Ovary (tissue), 10 donors: ENCODE measurements at regions of chr12 and their contacts with region 1.

Region 1: GRCh38 chr12:6778574-6779550 is 6.5 kb downstream of the LAG3 start:
- DNase-seq: peak; percentile 96 to 97 (median 97)
- H3K4me3 ChIP-seq: peak overlapping the region; percentile 37
- H3K27ac ChIP-seq: peak overlapping the region; percentile 61 to 87
- H3K4me1 ChIP-seq: peaks cover 2% of the 10 kb centered on the region
- H3K27me3 ChIP-seq: no peaks in the 10 kb centered on the region
- CTCF ChIP-seq: peak; percentile 98
- EP300 ChIP-seq: no peak
- POLR2A ChIP-seq: peak; percentile 43

Region 2: GRCh38 chr12:6554168-6555017 is 224.5 kb before region 1 on chr12:
- intact Hi-C with region 1: loop called in 1 of 4 experiments (anchors 10 kb)
- DNase-seq: peak; percentile 61 to 76 (median 74)
- H3K4me3 ChIP-seq: peak overlapping the region; percentile 79
- H3K27ac ChIP-seq: peak overlapping the region in 1 of 2 donors; percentile 26
- H3K4me1 ChIP-seq: peaks cover 25% of the 10 kb centered on the region
- H3K27me3 ChIP-seq: no peaks in the 10 kb centered on the region
- CTCF ChIP-seq: peak in 1 of 3 donors; percentile 43
- EP300 ChIP-seq: no peak
- POLR2A ChIP-seq: no peak

Region 3: DNA sequence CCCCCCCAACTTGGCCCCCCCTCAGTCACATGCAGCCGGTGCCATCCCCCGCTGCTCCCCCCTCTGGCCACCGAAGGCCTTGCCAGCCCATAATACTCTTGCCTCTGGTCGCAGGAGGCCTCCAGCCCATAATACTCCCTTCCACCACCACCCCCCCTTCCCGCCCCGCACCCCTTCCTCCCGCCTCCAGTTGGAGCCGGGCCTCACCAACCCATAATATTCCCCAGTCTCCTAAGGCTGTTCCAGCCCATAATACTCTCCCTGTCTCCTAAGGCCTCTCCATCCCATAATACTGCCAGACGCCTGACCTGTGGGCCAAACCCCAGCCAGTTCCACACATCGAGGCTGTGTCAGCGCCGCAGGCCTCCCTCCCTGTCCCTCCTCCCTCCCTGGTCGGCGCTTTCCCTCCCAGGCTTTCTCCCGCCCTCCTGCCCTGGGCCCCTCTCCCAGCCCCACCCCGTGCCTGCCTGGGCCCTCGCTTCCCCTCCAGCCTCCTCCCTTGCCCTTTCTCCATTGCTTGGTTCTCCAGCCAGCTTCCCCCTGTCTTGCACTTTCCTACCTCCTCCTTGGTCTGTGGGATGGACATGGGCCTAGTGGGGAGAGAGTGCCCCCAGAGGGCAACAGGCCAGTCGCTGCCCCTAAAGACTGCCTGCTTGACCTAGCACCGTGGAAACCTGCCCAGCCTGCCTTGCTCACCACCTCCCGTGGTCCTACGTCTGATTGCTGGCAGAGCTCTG is 164.9 kb before region 1 on chr12:
- intact Hi-C with region 1: loop called in 1 of 4 experiments (anchors 5 kb)
- DNase-seq: peak; percentile 94 to 97 (median 97)
- H3K4me3 ChIP-seq: no peak overlapping the region
- H3K27ac ChIP-seq: peak overlapping the region; percentile 87 to 93
- H3K4me1 ChIP-seq: peaks cover 4% of the 10 kb centered on the region
- H3K27me3 ChIP-seq: no peaks in the 10 kb centered on the region
- CTCF ChIP-seq: no peak
- EP300 ChIP-seq: no peak
- POLR2A ChIP-seq: no peak

Region 4: GRCh38 chr12:6700646-6701051 is 78.2 kb before region 1 on chr12 and contains the start of gene PIANP:
- intact Hi-C with region 1: no loop called
- DNase-seq: peak in 4 of 5 donors; percentile 25 to 75 (median 61)
- H3K4me3 ChIP-seq: peak within 1 kb of the TSS; percentile 62
- H3K27ac ChIP-seq: no peak within 1 kb of the TSS
- H3K4me1 ChIP-seq: peaks cover 2% of the 10 kb centered on the region
- H3K27me3 ChIP-seq: no peaks in the 10 kb centered on the region
- CTCF ChIP-seq: no peak
- EP300 ChIP-seq: no peak
- POLR2A ChIP-seq: no peak
- total RNA-seq, gene PIANP: 0.11 to 3.1 (median 0.85) TPM in 6 of 7 donors, not detected in the other

Region 5: DNA sequence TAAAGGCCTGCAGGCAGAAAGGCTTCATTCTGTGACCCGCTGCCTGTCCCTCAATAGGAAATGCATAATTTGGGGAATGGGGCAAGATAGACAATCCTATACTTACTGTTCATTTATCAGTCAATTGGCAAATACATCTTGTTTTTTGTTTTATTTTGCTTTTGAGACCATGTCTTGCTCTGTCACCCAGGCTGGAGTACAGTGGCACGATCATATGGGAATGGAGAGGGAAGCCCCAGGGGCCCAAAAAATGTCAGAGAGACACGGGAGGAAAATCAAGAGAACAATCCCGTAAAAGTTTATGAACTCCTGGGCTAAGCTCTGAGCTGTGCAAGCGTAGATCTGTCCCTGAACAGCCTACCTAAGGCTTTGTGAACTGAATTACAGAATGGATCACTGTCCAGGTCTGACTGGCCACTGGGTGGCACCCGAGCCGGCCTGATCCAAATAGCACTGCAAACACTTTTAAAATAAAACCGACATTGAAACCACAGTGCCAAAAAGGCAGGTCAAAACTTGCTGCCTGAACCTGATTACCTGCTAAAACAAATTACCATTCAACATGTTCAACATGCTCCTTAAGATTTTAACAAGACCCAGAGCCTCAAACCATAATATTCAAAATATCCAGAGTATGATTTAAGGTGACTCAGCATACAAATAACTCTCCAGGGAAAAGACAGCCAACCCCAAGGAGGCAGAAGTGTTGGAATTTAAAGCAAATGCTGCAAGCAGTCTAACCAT is 43.2 kb before region 1 on chr12:
- intact Hi-C with region 1: loop called in 3 of 4 experiments (anchors 5 to 10 kb)
- DNase-seq: peak; percentile 54 to 79 (median 75)
- H3K4me3 ChIP-seq: no peak overlapping the region
- H3K27ac ChIP-seq: no peak overlapping the region
- H3K4me1 ChIP-seq: no peaks in the 10 kb centered on the region
- H3K27me3 ChIP-seq: no peaks in the 10 kb centered on the region
- CTCF ChIP-seq: peak; percentile 63 to 76 (median 71)
- EP300 ChIP-seq: no peak
- POLR2A ChIP-seq: no peak

Region 6: DNA sequence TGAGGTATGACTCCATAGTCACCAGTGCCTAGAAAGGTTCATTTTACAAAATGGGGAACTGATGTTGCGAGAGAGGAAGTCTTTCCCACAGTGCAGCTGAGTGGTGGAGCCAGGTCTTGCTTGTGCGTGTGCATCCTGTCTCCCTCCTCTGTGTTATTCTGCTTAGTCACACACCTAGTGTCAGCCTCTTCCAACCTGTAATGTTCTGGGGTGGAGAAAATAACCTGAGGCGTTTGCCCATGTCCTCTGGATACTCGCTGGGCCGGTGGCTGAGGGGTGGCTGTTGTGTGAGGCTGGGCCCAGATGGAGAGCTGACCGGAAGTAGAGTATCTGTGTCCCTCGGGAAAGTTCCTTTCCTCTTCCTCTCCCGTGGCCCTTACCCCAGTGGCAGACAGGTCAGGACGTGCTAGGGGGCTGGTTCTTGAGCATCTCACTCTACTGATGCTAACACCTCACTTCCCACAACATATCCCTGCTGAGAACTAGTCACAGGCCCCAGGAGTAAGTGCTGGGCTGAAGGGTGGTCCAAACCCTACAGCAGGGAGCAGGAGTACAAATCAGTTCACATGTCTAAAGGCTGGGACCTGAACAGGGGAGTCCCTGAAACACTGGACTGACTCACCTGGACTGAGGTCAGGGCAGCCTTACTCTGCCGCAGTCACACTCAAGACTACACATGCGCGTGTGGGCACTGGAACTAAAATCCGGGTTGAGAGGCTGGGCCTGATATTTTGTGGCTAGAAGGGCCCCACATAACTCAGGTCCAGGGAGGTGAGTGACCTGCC is 32.9 kb before region 1 on chr12:
- intact Hi-C with region 1: loop called in 1 of 4 experiments (anchors 5 kb)
- DNase-seq: no peak
- H3K4me3 ChIP-seq: no peak overlapping the region
- H3K27ac ChIP-seq: no peak overlapping the region
- H3K4me1 ChIP-seq: no peaks in the 10 kb centered on the region
- H3K27me3 ChIP-seq: no peaks in the 10 kb centered on the region
- CTCF ChIP-seq: no peak
- EP300 ChIP-seq: no peak
- POLR2A ChIP-seq: no peak

Region 7: GRCh38 chr12:6752921-6753771 is 25.7 kb before region 1 on chr12 and contains the start of gene MLF2:
- intact Hi-C with region 1: loop called in 2 of 4 experiments (anchors 1 to 5 kb)
- DNase-seq: peak; percentile 99
- H3K4me3 ChIP-seq: peak within 1 kb of the TSS; percentile 76
- H3K27ac ChIP-seq: peak within 1 kb of the TSS; percentile 96 to 100
- H3K4me1 ChIP-seq: peaks cover 7% of the 10 kb centered on the region
- H3K27me3 ChIP-seq: no peaks in the 10 kb centered on the region
- CTCF ChIP-seq: peak; percentile 13 to 98 (median 96)
- EP300 ChIP-seq: peak; percentile 66
- POLR2A ChIP-seq: peak; percentile 98
- total RNA-seq, gene MLF2: 64.1 to 162 (median 141) TPM

Region 8: GRCh38 chr12:6825398-6826124 is 46.7 kb after region 1 on chr12:
- intact Hi-C with region 1: loop called in 1 of 4 experiments (anchors 5 kb)
- DNase-seq: peak; percentile 73 to 91 (median 90)
- H3K4me3 ChIP-seq: peak overlapping the region; percentile 22
- H3K27ac ChIP-seq: no peak overlapping the region
- H3K4me1 ChIP-seq: peaks cover 14% of the 10 kb centered on the region
- H3K27me3 ChIP-seq: no peaks in the 10 kb centered on the region
- CTCF ChIP-seq: peak; percentile 87 to 91 (median 89)
- EP300 ChIP-seq: no peak
- POLR2A ChIP-seq: no peak